ENCODE measurements at regions of chr6 and their contacts with region 1.

Region 1: GRCh38 chr6:142692942-142693341 is 252.0 kb downstream of the HIVEP2 start:
- DNase-seq: peak; percentile 79
- H3K4me3 ChIP-seq: peak overlapping the region; percentile 31
- CTCF ChIP-seq: peak; percentile 87

Region 2: GRCh38 chr6:142926494-142927270 is 233.7 kb after region 1 on chr6:
- CTCF ChIA-PET with region 1: interaction called, 10 read pairs
- POLR2A ChIA-PET with region 1: no interaction called
- DNase-seq: no peak
- H3K4me3 ChIP-seq: peak overlapping the region; percentile 62
- CTCF ChIP-seq: no peak

Region 3: GRCh38 chr6:143026696-143027449 is 333.9 kb after region 1 on chr6:
- CTCF ChIA-PET with region 1: interaction called, 12 read pairs
- POLR2A ChIA-PET with region 1: no interaction called
- DNase-seq: no peak
- H3K4me3 ChIP-seq: no peak overlapping the region
- CTCF ChIP-seq: peak; percentile 46

Region 4: DNA sequence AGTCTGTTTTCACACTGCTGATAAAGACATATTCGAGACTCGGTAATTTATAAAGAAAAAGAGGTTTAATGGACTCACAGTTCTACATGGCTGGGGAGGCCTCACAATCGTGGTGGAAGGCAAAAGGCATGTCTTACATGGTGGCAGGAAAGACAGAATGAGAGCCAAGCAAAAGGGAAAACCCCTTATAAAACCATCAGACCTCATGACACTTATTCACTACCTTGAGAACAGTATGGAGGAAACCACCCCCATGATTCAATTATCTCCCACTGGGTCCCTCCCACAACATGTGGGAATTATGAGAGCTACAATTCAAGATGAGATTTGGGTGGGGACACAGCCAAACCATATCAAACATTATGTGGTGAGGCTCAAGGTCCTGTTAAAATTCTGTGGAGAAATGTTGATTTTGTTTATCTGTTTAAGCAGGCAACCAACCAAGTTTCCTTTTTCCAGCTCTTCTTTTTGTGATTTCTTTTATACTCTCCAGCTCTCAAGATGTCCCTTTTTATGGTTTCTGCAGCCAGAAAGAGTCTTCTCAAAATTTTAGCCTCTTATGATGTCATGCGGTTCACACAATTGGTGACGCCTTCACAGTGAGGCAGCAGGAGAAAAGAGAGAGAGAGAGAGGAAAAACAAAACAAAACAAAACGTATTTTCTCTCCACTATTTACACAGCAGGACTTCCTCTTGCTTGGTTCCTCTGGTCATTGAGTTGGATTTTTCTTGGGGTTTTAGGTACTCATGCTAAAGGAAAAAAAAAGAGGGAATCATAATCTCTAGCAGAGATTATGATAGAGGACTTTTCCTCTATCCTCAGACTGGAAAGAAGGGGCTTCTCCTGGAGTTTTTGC is 385.8 kb after region 1 on chr6:
- CTCF ChIA-PET with region 1: no interaction called
- POLR2A ChIA-PET with region 1: no interaction called
- DNase-seq: no peak
- H3K4me3 ChIP-seq: no peak overlapping the region
- CTCF ChIP-seq: no peak

Region 5: GRCh38 chr6:143232849-143233248 is 539.9 kb after region 1 on chr6:
- CTCF ChIA-PET with region 1: no interaction called
- POLR2A ChIA-PET with region 1: no interaction called
- DNase-seq: no peak
- H3K4me3 ChIP-seq: no peak overlapping the region
- CTCF ChIP-seq: peak; percentile 48